Right ventricle myocardium inferior (tissue), 1 donor: ENCODE measurements at regions of chr6 and their contacts with region 1.

Region 1: GRCh38 chr6:53651764-53652401 is 13.7 kb downstream of the KLHL31 start:
- DNase-seq: peak; percentile 86
- ATAC-seq: peak; percentile 73

Region 2: DNA sequence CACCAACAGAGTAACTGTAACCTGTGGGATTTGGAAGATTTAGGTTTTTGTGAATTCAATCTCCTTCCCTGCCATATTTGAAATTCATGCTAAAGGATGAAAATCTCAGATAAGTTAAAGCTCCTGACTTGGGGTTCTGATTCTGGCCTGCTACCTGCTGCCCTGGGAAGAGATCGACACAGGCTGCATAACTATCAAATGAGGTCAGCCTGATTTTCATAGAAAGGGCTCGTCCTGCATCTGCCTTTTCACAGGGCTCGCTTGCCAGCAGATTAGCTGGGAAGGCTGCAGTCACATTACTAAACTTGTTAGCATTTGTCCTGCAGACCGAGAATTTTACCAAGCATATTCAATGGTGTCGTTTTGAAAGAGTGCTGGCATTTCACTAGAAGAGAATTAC is 121.5 kb before region 1 on chr6:
- intact Hi-C with region 1: loop called (anchors 5 kb)
- DNase-seq: peak; percentile 51
- ATAC-seq: peak; percentile 80

Region 3: GRCh38 chr6:53544470-53545308 is 107.2 kb before region 1 on chr6 and contains the start of gene GCLC:
- intact Hi-C with region 1: loop called (anchors 5 kb)
- DNase-seq: peak; percentile 98
- ATAC-seq: peak; percentile 84
- total RNA-seq, gene GCLC: 26.7 TPM

Region 4: GRCh38 chr6:53854843-53855567 is 203.1 kb after region 1 on chr6:
- intact Hi-C with region 1: no loop called
- DNase-seq: no peak
- ATAC-seq: no peak